AG04450 (cell line): ENCODE measurements at regions of chr15 and their contacts with region 1.

Region 1: DNA sequence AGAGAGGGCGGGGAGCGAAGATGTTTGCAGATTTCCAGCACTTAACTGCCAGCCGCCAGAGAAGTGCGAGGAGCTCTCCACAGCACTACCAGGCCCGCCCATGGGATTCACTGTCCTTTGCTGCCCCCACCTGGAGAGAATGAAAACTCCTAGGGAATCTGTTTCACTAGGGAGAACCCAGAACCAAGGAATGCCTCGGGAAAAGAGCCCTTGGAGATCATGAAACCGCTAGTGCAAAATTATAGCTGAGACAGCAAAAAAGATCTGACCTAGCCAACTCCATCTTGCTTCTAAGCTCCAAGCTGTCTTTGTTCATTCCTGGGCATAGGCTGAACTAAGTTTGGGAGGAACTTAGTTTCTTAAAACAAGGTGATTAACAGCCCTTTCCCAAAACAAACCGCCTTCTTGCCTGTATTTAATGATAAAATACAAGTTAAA is 82.6 kb upstream of the GCNT3 start:
- DNase-seq: peak; percentile 70
- H3K4me3 ChIP-seq: no peak overlapping the region
- H3K27ac ChIP-seq: no peak overlapping the region
- H3K27me3 ChIP-seq: peaks cover 3% of the 10 kb centered on the region
- CTCF ChIP-seq: peak; percentile 88

Region 2: GRCh38 chr15:58212909-58213526 is 1316.0 kb before region 1 on chr15:
- CTCF ChIA-PET with region 1: interaction called, 14 read pairs
- POLR2A ChIA-PET with region 1: no interaction called
- DNase-seq: no peak
- H3K4me3 ChIP-seq: no peak overlapping the region
- H3K27ac ChIP-seq: no peak overlapping the region
- H3K27me3 ChIP-seq: no peaks in the 10 kb centered on the region
- CTCF ChIP-seq: peak; percentile 71

Region 3: GRCh38 chr15:58980351-58980939 is 548.5 kb before region 1 on chr15:
- CTCF ChIA-PET with region 1: interaction called, 32 read pairs
- POLR2A ChIA-PET with region 1: no interaction called
- DNase-seq: no peak
- H3K4me3 ChIP-seq: no peak overlapping the region
- H3K27ac ChIP-seq: no peak overlapping the region
- H3K27me3 ChIP-seq: no peaks in the 10 kb centered on the region
- CTCF ChIP-seq: peak; percentile 54

Region 4: GRCh38 chr15:59434481-59434880 is 94.5 kb before region 1 on chr15:
- CTCF ChIA-PET with region 1: interaction called, 10 read pairs
- POLR2A ChIA-PET with region 1: no interaction called
- DNase-seq: no peak
- H3K4me3 ChIP-seq: no peak overlapping the region
- H3K27ac ChIP-seq: no peak overlapping the region
- H3K27me3 ChIP-seq: peaks cover 31% of the 10 kb centered on the region
- CTCF ChIP-seq: no peak

Region 5: GRCh38 chr15:59516655-59517461 is 12.1 kb before region 1 on chr15:
- CTCF ChIA-PET with region 1: interaction called, 60 read pairs
- POLR2A ChIA-PET with region 1: no interaction called
- DNase-seq: no peak
- H3K4me3 ChIP-seq: no peak overlapping the region
- H3K27ac ChIP-seq: no peak overlapping the region
- H3K27me3 ChIP-seq: peaks cover 7% of the 10 kb centered on the region
- CTCF ChIP-seq: no peak

Region 6: DNA sequence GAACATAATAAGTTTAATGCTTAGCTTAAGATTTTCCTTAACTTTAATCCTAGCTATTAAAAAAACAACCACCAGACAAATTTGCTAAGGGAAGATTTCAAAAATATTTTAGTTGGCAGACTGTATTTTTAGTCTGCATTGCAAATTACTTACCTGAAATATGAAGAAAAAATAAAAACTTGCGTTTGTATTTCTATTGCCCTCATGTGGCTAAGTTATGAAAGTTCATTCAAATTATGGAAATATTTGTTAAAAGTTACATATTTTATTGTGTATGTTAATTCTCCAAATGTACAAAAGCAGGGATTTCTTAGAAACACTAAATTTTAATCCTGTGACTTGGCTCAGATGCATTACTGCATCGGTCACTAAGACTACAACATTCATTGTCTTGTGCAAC is 113.4 kb after region 1 on chr15:
- CTCF ChIA-PET with region 1: interaction called, 26 read pairs
- POLR2A ChIA-PET with region 1: no interaction called
- DNase-seq: no peak
- H3K4me3 ChIP-seq: no peak overlapping the region
- H3K27ac ChIP-seq: no peak overlapping the region
- H3K27me3 ChIP-seq: no peaks in the 10 kb centered on the region
- CTCF ChIP-seq: no peak

Region 7: DNA sequence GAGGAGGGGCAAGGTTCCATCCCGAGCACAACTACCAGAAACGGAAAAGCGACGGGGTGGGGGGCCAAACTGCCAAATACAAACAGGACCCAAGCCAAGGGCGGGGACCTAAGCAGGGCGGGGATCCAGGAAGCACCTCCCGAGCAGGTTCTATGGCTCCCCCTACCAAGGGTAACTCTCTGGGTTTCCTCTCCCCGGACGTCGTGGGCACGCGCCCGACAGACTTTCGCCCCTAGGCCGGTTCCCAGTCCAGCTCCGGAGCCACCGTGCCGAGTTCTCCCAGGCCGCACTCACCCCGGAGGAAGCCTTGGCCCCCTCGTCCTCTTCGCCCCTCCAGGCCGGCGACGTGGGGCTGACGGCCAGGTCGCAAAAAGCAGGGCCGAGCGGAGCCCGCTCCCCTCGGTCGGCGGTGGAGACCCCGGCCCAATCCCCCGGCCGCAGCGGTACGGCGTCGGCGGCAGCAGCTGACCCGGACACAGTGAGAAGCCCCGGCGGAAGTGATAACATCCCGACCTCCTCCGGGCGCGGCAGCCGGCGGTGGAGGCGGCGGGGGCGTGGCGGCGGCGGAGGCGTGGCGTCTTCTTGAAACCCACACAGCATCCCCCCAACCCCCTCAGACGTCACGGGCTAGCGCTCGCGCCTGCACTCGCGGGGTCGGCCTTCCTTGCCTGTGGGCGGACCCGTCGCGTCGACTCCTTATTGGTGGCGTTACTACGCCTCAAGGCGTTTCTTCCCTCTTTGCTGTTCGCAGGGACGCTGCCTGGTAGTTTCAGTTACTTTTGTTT is 160.0 kb after region 1 on chr15 and contains the start of gene BNIP2:
- CTCF ChIA-PET with region 1: interaction called, 11 read pairs
- POLR2A ChIA-PET with region 1: no interaction called
- DNase-seq: peak; percentile 94
- H3K4me3 ChIP-seq: peak within 1 kb of the TSS; percentile 94
- H3K27ac ChIP-seq: peak within 1 kb of the TSS; percentile 99
- H3K27me3 ChIP-seq: no peaks in the 10 kb centered on the region
- CTCF ChIP-seq: no peak
- polyA plus RNA-seq, gene BNIP2: 45.4 and 65.9 TPM in 2 replicates